ENCODE measurements at regions of chr7 and their contacts with region 1.

Region 1: DNA sequence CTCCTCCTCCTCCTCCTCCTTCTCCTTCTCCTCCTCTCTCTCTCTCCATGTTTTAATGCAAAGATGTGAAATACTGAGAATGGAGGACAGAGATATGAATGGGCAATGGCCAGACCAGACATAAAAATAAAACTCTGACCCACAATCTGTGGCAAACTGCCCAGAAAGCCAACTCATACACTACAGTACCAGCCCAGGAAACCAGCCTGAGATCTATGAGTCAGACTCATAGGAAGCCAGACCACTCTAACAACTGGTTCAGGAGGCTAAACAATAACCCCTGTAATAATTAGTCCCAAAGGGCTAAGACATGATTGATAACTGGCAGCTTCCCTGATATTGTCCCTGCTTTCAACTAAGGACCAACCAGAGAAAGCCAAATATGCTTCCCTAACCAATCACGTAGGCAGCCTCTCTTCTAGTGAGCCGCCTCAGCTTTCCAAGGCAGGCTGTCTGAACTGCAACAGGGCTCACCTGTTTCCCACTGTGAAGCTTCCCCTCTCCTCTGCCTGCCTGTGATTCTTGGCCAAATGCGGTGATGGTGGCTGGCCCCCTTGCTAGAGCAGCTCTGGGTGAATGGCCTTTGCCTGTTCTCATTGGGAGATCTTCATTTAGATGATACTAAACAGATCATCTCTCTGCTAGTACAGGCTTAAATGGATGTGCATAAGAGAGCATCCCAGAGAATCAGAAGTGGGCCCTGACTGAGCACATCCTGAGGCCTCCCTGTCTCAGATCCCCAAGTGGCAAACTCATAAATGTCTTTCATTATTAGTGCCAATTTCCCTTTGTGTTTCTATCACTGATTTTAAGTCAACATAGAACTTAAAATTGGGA is 817.6 kb downstream of the TNS3 start:
- DNase-seq: peak; percentile 90
- H3K4me3 Mint-ChIP-seq: peak overlapping the region; percentile 4
- H3K27ac Mint-ChIP-seq: peak overlapping the region; percentile 80
- H3K4me1 Mint-ChIP-seq: peaks cover 30% of the 10 kb centered on the region
- H3K27me3 Mint-ChIP-seq: no peaks in the 10 kb centered on the region
- CTCF ChIP-seq: no peak

Region 2: GRCh38 chr7:46786221-46786954 is 22.1 kb after region 1 on chr7:
- CTCF ChIA-PET with region 1: interaction called, 3 read pairs
- intact Hi-C with region 1: loop called (anchors 2 kb)
- DNase-seq: peak; percentile 69
- H3K4me3 Mint-ChIP-seq: peak overlapping the region; percentile 45
- H3K27ac Mint-ChIP-seq: peak overlapping the region; percentile 95
- H3K4me1 Mint-ChIP-seq: peaks cover 29% of the 10 kb centered on the region
- H3K27me3 Mint-ChIP-seq: no peaks in the 10 kb centered on the region
- CTCF ChIP-seq: no peak